ENCODE measurements at regions of chr5 and their contacts with region 1.

Region 1: GRCh38 chr5:154138021-154138420 is 52.5 kb upstream of the GALNT10 start:
- DNase-seq: no peak
- ATAC-seq: no peak
- H3K4me3 ChIP-seq: no peak overlapping the region
- H3K4me3 Mint-ChIP-seq: no peak overlapping the region
- H3K27ac ChIP-seq: no peak overlapping the region
- H3K27ac Mint-ChIP-seq: no peak overlapping the region
- H3K4me1 ChIP-seq: no peaks in the 10 kb centered on the region
- H3K4me1 Mint-ChIP-seq: no peaks in the 10 kb centered on the region
- H3K27me3 ChIP-seq: peaks cover 2 to 5% of the 10 kb centered on the region in 2 experiments
- H3K27me3 Mint-ChIP-seq: peaks cover 0 to 4% of the 10 kb centered on the region in 2 donors

Region 2: DNA sequence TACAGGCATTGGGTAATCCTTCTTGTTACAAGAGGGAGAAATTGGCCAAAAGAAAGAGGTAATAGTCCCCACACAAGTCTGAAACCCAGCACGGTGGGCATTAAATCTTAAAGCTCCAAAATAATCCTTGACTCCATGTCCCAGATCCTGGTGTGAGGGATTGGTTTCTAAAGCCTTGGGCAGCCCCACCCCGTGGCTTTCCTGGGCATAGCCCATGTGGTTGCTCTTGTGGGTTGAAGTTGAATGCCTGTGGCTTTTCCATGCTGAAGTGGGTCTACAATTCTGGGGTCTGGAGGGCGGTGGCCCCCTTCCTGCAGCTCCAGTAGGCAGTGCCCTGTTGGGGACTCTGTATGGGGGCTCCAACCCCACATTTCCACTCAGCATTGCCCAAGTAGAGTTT is 525.4 kb after region 1 on chr5:
- CTCF ChIA-PET with region 1: no interaction called
- POLR2A ChIA-PET with region 1: no interaction called
- DNase-seq: no peak
- ATAC-seq: no peak
- H3K4me3 ChIP-seq: no peak overlapping the region
- H3K4me3 Mint-ChIP-seq: no peak overlapping the region
- H3K27ac ChIP-seq: no peak overlapping the region
- H3K27ac Mint-ChIP-seq: no peak overlapping the region
- H3K4me1 ChIP-seq: no peaks in the 10 kb centered on the region
- H3K4me1 Mint-ChIP-seq: no peaks in the 10 kb centered on the region
- H3K27me3 ChIP-seq: peaks cover 0 to 5% of the 10 kb centered on the region in 2 experiments
- H3K27me3 Mint-ChIP-seq: no peaks in the 10 kb centered on the region

Region 3: DNA sequence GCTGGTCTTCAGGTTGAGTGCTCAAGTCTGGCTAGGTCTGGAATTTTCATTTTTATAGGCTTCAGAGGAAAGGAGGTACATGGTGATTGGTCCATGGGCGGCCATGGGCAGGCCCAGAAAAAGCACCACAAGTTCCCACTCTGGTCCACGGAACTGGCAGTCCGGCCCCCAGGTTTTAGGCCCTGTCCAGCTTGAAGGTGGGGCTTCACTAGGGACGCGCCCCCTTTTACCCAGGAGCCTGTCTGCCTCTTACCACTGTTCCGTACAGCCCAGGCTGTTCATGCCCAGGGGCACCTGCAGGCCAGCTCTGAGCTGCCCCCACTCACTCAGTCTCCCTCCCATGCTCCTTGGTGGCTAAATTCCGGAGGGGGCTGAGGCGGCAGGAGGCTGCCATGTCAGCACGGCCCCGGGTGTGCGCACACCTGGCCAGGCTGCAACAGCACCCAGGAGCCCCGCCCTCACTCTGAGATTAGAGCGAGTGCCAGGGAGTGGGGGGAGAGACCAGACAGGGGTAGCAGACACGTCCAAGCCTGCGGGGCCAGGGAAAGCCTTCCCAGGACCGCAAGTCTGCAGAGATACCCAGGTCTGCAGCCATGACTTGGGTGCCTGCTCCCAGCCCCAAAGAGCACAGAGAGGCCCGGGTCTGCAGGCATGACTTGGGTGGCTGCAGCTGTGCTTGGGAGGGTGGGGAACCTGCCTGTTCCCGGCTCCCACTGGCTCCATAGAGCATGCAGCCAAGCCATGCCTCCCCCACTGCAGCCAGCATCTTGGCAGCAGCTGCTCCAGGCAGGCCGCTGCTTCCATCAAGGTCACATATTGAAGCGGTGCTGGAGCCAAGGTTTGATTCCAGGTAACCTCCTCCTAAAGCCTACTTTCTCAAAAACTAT is 1798.7 kb after region 1 on chr5:
- CTCF ChIA-PET with region 1: interaction called in 1 of 2 experiments, 13 read pairs
- POLR2A ChIA-PET with region 1: no interaction called
- DNase-seq: no peak
- ATAC-seq: no peak
- H3K4me3 ChIP-seq: no peak overlapping the region
- H3K4me3 Mint-ChIP-seq: no peak overlapping the region
- H3K27ac ChIP-seq: no peak overlapping the region
- H3K27ac Mint-ChIP-seq: no peak overlapping the region
- H3K4me1 ChIP-seq: no peaks in the 10 kb centered on the region
- H3K4me1 Mint-ChIP-seq: no peaks in the 10 kb centered on the region
- H3K27me3 ChIP-seq: peaks cover 0 to 13% of the 10 kb centered on the region in 2 experiments
- H3K27me3 Mint-ChIP-seq: peaks cover 3 to 6% of the 10 kb centered on the region in 2 donors

Measured in T-cell (primary cell).